ENCODE measurements at regions of chr3 and their contacts with region 1.

Region 1: DNA sequence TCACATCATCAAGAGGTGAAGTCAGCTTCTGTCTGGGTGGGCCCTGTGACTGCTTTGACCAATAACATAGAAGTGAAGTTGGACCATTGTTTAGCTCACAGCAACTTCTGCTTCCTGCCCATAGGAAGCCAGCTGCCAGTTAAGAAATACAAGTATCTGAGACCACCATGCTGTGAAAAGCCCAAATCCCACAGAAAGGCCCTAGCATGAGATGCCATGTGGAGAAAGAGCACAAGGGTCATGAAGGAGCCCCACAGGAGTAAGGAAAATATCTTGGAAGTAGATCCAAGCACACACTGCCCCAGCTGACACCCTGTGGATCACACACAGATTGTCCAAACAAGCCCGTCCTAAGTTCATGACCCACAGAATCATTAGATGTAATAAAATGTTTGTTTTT is 28.5 kb downstream of the RTP4 start:
- DNase-seq: no peak

Region 2: GRCh38 chr3:187370051-187370450 is 26.6 kb before region 1 on chr3:
- intact Hi-C with region 1: no loop called
- DNase-seq: no peak

Region 3: DNA sequence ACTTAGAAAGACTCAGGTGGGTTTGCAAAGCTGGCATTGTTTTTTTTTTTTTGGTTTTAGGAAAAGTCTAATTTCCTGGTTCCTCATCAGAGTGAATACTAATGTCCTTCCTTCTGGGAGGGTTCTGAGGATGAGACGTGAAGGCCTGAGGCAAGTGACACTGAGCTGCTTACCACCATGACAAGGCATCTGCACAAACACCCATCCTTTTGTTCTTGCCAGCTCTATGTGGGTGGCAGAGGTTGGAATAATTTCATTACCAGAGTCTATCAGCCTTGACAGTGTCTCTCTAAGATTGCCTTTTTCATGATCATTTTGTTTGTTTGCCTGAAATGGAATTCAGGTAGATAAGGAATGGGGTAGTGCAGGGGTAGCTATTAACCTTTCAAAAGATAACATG is 11.4 kb before region 1 on chr3:
- intact Hi-C with region 1: loop called in 1 of 2 experiments (anchors 1 kb)
- DNase-seq: no peak